ENCODE measurements at regions of chr16 and their contacts with region 1.

Region 1: DNA sequence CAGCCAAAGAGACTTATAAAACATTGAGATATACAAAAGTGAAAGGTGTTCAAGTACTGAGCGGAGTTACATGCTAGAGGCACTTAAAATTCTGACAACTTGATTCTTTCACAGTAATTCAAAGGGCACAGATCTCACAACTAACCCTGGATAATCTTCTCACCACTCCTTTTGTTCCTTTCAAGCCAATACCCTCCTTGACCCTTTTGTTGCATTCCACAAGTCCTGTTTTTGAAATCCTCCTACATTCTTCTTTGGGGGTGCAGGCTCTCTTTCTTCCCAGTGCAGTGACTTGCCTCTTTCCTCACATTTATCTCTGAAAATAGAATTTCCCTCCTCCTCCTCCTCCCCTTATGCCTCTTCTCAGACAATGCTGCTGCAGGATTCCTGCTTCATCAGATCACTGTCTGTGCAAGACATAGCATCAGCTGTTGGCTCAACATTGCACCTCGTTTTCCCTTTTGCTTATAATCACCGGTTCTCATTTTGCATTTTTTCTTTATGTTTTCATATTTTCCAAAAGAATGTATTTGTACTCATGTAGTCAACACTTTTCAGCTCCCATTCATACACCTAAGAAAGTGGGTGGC is 199.3 kb downstream of the CDH8 start:
- DNase-seq: no peak
- ATAC-seq: no peak
- H3K4me3 ChIP-seq: no peak overlapping the region
- H3K27ac ChIP-seq: no peak overlapping the region
- H3K4me1 ChIP-seq: no peaks in the 10 kb centered on the region
- H3K27me3 ChIP-seq: no peaks in the 10 kb centered on the region
- CTCF ChIP-seq: no peak
- POLR2A ChIP-seq: no peak

Region 2: DNA sequence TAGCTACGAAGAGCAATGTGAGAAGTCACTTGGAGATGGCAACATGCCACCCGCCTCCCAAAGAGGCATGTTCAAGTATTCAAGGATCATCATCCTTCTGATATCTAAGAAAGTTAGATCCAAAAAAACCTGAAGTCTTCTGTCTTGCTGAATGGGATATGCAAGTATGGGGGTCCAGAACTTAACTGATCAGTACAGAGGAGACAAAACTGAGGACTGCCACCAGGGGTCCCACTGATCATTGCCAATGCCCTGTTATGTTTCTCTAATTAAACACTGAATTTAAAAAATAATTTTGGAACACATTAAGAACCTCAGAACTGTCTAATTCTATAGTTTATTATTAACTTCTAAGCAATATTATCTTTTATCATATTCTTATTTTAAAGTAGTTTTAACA is 99.6 kb after region 1 on chr16:
- in situ Hi-C with region 1: loop called in 1 of 4 experiments (anchors 25 kb)
- intact Hi-C with region 1: no loop called
- DNase-seq: no peak
- ATAC-seq: no peak
- H3K4me3 ChIP-seq: no peak overlapping the region
- H3K27ac ChIP-seq: no peak overlapping the region
- H3K4me1 ChIP-seq: no peaks in the 10 kb centered on the region
- H3K27me3 ChIP-seq: no peaks in the 10 kb centered on the region
- CTCF ChIP-seq: no peak
- POLR2A ChIP-seq: no peak